ENCODE measurements at regions of chr15 and their contacts with region 1.

Region 1: DNA sequence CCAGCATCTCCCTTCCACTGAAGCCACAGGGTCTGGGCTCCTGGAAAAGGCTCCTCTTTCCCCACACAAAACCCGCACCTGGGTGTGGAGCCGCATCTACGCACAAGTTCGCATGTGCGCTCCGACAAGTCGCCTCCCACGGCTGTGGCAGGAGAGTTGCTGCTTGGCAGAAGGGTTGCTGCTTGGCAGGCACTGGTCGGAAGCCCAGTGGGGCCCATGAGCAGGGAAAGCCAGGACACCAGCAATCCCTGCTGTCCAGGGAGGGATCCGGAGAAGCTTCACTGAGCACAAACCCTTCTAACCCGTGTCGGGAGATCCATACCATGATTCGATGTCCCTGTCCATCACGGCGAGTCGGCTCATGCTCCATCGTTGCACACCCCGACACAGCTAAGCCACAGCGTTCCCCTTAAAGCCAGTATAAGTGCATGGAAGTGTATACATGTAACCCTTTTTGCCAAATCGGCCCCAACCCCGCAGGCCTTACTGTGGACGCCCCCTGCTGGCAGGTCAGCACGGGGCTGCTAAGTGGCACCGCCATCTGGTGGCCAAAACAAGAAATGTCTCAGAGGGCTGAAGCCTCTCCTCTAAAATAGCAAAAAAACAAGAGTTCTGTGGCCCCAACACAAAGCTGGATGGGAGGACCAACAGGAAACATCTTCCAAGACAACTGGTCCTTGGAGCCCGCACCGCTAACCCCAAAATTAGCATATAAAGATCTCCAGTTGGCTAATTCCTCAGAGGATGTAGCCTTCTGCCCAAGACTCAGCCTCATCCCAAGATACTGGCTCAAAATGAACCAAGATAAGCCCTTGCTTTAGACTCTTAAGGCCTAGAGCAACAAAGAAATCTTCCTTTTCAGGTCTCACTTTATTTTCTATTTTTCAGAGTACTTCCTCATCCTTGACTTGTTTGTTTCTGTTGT is 8.3 kb downstream of the ANKRD63 start:
- DNase-seq: peak; percentile 91
- H3K4me3 Mint-ChIP-seq: no peak overlapping the region
- H3K27ac Mint-ChIP-seq: peak overlapping the region; percentile 28
- H3K4me1 Mint-ChIP-seq: peaks cover 6% of the 10 kb centered on the region
- H3K27me3 Mint-ChIP-seq: peaks cover 27% of the 10 kb centered on the region

Region 2: GRCh38 chr15:39686000-39686613 is 588.5 kb before region 1 on chr15:
- CTCF ChIA-PET with region 1: no interaction called
- POLR2A ChIA-PET with region 1: no interaction called
- intact Hi-C with region 1: loop called (anchors 10 kb)
- DNase-seq: peak; percentile 28
- H3K4me3 Mint-ChIP-seq: no peak overlapping the region
- H3K27ac Mint-ChIP-seq: no peak overlapping the region
- H3K4me1 Mint-ChIP-seq: no peaks in the 10 kb centered on the region
- H3K27me3 Mint-ChIP-seq: peaks cover 2% of the 10 kb centered on the region

Region 3: GRCh38 chr15:40050788-40051470 is 223.7 kb before region 1 on chr15:
- CTCF ChIA-PET with region 1: interaction called, 195 read pairs
- POLR2A ChIA-PET with region 1: no interaction called
- intact Hi-C with region 1: no loop called
- DNase-seq: no peak
- H3K4me3 Mint-ChIP-seq: no peak overlapping the region
- H3K27ac Mint-ChIP-seq: no peak overlapping the region
- H3K4me1 Mint-ChIP-seq: peaks cover 61% of the 10 kb centered on the region
- H3K27me3 Mint-ChIP-seq: no peaks in the 10 kb centered on the region

Region 4: GRCh38 chr15:40217159-40217824 is 57.3 kb before region 1 on chr15:
- CTCF ChIA-PET with region 1: interaction called, 197 read pairs
- POLR2A ChIA-PET with region 1: no interaction called
- intact Hi-C with region 1: loop called (anchors 1 kb)
- DNase-seq: peak; percentile 40
- H3K4me3 Mint-ChIP-seq: no peak overlapping the region
- H3K27ac Mint-ChIP-seq: no peak overlapping the region
- H3K4me1 Mint-ChIP-seq: no peaks in the 10 kb centered on the region
- H3K27me3 Mint-ChIP-seq: no peaks in the 10 kb centered on the region

Region 5: DNA sequence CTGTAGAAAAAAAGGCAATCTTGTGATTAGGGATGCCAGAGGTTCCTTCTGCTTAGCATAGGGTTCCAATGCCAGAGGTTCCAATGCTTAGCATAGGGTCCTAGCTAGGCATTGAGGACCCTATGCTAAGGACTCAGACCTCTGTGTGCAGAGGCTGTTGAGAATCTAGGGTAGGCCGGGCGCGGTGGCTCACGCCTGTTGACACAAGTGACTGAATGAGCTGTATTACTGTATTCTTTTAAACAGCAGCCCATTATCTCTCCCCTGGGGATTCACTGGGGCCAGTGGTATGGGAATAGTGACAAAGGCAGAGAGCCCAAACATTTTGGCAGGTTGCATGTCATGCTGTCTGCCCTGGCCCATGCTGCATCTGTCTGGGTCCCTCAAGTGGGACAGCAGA is 19.6 kb before region 1 on chr15:
- CTCF ChIA-PET with region 1: interaction called, 64 read pairs
- POLR2A ChIA-PET with region 1: no interaction called
- intact Hi-C with region 1: no loop called
- DNase-seq: no peak
- H3K4me3 Mint-ChIP-seq: no peak overlapping the region
- H3K27ac Mint-ChIP-seq: no peak overlapping the region
- H3K4me1 Mint-ChIP-seq: peaks cover 6% of the 10 kb centered on the region
- H3K27me3 Mint-ChIP-seq: peaks cover 30% of the 10 kb centered on the region

Region 6: GRCh38 chr15:40323239-40323952 is 48.8 kb after region 1 on chr15 and contains the start of gene INAFM2:
- CTCF ChIA-PET with region 1: interaction called, 500 read pairs
- POLR2A ChIA-PET with region 1: no interaction called
- intact Hi-C with region 1: no loop called
- DNase-seq: peak; percentile 88
- H3K4me3 Mint-ChIP-seq: peak within 1 kb of the TSS; percentile 65
- H3K27ac Mint-ChIP-seq: no peak within 1 kb of the TSS
- H3K4me1 Mint-ChIP-seq: peaks cover 18% of the 10 kb centered on the region
- H3K27me3 Mint-ChIP-seq: no peaks in the 10 kb centered on the region
- total RNA-seq, gene INAFM2: 6.7 to 7.4 TPM